Mammary epithelial cell (primary cell): ENCODE measurements at regions of chr12 and their contacts with region 1.

Region 1: DNA sequence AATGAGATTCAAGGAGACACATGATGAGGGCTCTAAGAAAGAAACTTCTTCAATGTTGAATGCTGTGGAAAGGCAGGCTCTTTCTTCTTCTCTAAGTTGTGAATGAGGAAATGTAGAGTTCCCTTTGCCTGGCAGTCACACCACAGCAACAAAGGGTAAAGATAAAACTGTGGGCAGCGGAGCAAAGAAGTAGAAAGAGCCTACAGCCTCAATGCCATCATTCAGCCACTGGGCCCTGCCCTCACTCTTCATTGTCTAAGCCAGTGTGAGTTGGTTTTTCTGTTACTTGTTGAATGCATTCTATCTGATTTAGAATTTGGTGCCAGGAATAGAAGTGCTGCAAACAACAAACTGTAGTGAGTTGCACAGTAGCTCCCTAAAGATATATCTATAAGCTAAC is 12.2 kb downstream of the SDR9C7 start:
- DNase-seq: no peak
- H3K4me3 ChIP-seq: no peak overlapping the region
- H3K27ac ChIP-seq: no peak overlapping the region
- H3K4me1 ChIP-seq: no peaks in the 10 kb centered on the region
- H3K27me3 ChIP-seq: no peaks in the 10 kb centered on the region
- CTCF ChIP-seq: no peak

Region 2: GRCh38 chr12:56803750-56804149 is 118.3 kb before region 1 on chr12:
- CTCF ChIA-PET with region 1: no interaction called
- dilution Hi-C with region 1: loop called (anchors 10 kb)
- in situ Hi-C with region 1: no loop called
- intact Hi-C with region 1: no loop called
- DNase-seq: peak; percentile 57
- H3K4me3 ChIP-seq: no peak overlapping the region
- H3K27ac ChIP-seq: no peak overlapping the region
- H3K4me1 ChIP-seq: peaks cover 6% of the 10 kb centered on the region
- H3K27me3 ChIP-seq: no peaks in the 10 kb centered on the region
- CTCF ChIP-seq: peak in 1 of 2 donors; percentile 4